Mammary epithelial cell (primary cell): ENCODE measurements at regions of chr2 and their contacts with region 1.

Region 1: DNA sequence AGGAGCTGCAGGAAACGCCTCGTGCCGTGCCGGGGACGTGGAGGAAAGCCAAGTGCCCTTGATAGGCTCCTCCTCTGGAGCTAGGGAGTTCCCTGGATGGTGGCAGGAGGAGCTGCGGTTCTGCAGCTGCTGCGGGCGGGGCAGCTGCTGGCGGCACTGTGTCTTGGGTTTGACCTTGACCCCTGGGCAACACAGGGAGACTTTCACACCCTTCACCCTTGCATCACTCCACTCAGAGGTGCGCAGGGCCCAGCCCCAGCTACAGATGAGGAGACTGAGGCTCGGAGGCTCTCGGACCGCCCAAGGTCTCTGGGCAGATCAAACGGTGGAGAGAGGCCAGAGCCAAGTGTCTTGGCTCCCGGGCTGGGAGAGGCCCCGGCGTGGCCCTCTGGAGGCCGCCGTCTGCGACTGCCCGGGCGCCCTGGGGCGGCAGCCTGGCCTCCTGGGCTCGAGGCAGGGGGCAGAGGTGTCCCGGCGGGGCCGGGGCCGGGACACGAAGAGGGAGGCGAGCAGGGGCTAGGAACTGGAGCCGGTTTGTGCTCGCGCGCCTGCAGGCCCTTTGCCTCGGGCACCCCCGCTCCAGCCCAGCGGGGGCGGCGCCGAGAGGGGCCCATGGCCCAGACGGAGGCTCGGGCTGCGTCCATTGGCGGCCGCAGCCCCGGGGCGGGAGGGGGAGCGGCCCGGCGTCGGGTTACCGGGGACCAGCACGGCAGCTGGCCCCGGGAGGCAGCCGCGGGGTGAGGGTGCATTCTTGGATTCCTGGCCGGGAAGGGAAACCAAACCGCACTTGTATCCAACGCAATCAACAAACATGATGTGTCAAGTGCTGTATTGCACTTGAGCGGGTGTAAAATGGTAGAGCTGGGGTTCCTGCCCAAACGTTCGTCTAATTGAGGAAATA is 129.6 kb upstream of the SLC1A4 start:
- DNase-seq: peak; percentile 79
- H3K4me3 ChIP-seq: peak overlapping the region in 1 of 3 experiments; percentile 3
- H3K27ac ChIP-seq: peak overlapping the region; percentile 24
- H3K4me1 ChIP-seq: peaks cover 27% of the 10 kb centered on the region
- H3K27me3 ChIP-seq: no peaks in the 10 kb centered on the region
- CTCF ChIP-seq: no peak

Region 2: GRCh38 chr2:64062829-64063228 is 796.7 kb before region 1 on chr2:
- CTCF ChIA-PET with region 1: no interaction called
- dilution Hi-C with region 1: no loop called
- in situ Hi-C with region 1: no loop called
- intact Hi-C with region 1: no loop called
- DNase-seq: peak; percentile 91
- H3K4me3 ChIP-seq: no peak overlapping the region
- H3K27ac ChIP-seq: peak overlapping the region; percentile 20
- H3K4me1 ChIP-seq: peaks cover 15% of the 10 kb centered on the region
- H3K27me3 ChIP-seq: no peaks in the 10 kb centered on the region
- CTCF ChIP-seq: no peak

Region 3: DNA sequence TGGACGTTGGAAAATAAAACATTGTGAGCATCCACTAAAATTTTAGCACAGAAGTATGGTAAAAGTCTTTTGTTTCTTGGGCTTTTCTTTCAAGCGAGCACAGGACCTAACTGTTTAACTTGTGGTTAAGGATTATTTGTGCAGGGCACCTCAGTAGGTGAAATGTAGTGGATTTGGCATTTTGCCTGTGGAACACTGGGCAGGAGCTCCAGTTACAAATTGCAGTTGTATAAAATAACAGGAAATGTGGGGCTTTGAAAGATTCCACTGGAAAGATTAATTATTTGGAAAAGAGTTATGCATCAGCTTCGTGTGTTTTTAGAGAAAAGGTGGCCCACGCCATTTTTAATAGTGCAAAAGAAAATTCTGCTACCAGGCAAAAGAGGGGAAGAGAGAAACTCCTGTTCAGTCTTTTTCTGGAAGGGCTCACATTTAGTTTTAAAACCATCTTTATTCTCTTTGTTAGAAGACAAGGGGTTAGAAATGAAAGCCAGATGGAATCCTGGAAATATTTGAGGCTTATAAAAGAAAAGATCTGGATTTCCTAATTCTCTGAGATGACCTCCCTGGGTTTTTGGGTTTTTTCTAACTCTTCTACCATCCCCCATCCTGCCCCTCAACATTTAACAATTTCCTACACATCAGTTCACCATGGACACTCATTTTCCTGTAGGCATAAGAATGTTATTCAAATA is 61.5 kb before region 1 on chr2:
- CTCF ChIA-PET with region 1: no interaction called
- dilution Hi-C with region 1: loop called (anchors 5 kb)
- in situ Hi-C with region 1: no loop called
- intact Hi-C with region 1: no loop called
- DNase-seq: peak; percentile 62
- H3K4me3 ChIP-seq: no peak overlapping the region
- H3K27ac ChIP-seq: no peak overlapping the region
- H3K4me1 ChIP-seq: peaks cover 23% of the 10 kb centered on the region
- H3K27me3 ChIP-seq: no peaks in the 10 kb centered on the region
- CTCF ChIP-seq: no peak

Region 4: DNA sequence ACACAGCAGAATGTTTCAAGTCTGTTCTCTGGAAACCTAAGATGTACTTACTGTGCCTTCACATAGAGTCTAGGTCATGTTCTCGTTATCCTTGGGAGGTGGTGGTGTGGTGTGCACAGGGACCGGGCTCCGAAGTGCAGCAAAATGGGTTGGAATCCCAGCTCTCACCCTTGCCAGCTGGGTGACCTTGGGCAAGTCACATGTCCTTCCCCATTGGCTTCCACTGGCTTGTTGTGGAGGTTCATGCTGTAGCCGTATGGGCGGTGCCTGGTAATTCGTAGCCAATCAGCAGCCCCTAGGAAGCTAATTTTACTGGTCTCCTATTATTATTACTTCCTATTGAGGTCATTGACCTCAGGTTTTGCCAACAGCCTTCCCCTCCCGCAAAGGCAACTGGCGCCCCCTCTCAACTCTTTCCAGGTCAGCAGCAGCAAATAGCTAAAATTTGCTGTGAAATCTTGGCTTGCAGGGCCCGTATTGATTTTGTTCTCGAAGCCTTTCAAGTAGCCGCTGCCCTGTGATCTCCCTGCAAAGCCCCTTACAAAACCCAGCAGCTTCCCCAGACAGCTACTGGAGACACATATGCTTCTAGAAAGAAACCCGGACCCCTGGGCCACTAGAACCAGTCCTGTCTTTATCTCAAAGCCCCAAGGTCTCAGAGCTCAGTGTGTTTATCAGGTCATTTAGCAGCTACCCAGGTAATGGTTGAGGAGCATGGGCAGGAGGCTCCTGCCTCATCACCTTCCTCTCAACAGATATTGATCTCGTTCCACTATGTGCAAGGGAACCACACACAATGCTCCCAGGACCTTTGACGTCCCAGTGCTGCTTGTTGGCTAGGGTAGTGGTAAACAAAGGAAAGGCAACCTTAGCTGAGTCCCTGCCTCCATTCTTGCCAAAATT is 63.2 kb after region 1 on chr2:
- CTCF ChIA-PET with region 1: no interaction called
- dilution Hi-C with region 1: no loop called
- in situ Hi-C with region 1: no loop called
- intact Hi-C with region 1: no loop called
- DNase-seq: no peak
- H3K4me3 ChIP-seq: no peak overlapping the region
- H3K27ac ChIP-seq: no peak overlapping the region
- H3K4me1 ChIP-seq: peaks cover 2% of the 10 kb centered on the region
- H3K27me3 ChIP-seq: no peaks in the 10 kb centered on the region
- CTCF ChIP-seq: no peak

Region 5: DNA sequence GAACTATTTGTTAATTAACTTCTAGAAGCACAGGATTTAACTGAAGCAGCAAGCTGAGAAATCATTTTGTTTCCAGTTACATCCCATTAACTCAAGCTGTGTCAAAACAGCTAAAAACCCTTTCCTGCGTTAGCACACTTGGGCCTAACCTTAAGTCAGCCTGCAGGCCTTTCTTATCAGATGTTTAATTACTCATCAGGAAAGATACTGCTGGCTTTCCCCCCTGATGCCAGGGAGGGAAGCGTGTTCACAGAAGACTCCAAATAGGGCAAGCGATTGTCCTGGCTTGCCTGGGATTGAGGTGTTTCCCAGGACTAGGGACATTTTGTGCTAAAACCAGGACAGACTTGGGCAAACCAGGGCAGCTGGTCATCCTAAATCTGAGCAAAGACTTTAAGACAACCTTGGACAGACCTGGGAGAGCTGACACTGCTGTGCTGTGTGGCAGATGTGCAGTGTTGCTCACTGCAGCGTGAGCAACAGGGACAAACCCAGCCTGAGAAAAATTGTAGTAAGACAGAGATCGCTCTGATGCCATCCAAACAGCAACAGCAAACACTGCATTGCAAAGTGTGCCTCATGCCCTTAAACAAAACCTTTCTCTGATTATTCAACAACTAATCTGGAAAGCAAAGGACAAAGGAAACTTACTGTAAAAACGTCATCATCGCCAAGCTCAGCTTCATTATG is 471.9 kb after region 1 on chr2:
- CTCF ChIA-PET with region 1: no interaction called
- dilution Hi-C with region 1: no loop called
- in situ Hi-C with region 1: no loop called
- intact Hi-C with region 1: no loop called
- DNase-seq: no peak
- H3K4me3 ChIP-seq: no peak overlapping the region
- H3K27ac ChIP-seq: no peak overlapping the region
- H3K4me1 ChIP-seq: no peaks in the 10 kb centered on the region
- H3K27me3 ChIP-seq: no peaks in the 10 kb centered on the region
- CTCF ChIP-seq: no peak